Left ventricle myocardium superior (tissue), 1 donor: ENCODE measurements at regions of chr6 and their contacts with region 1.

Region 1: GRCh38 chr6:27765028-27765590 is 147.1 kb downstream of the OR2B2 start:
- DNase-seq: no peak
- ATAC-seq: no peak

Region 2: GRCh38 chr6:27894839-27895762 is 130.0 kb after region 1 on chr6:
- intact Hi-C with region 1: loop called (anchors 5 kb)
- DNase-seq: no peak
- ATAC-seq: peak; percentile 85